ENCODE measurements at regions of chr7 and their contacts with region 1.

Region 1: DNA sequence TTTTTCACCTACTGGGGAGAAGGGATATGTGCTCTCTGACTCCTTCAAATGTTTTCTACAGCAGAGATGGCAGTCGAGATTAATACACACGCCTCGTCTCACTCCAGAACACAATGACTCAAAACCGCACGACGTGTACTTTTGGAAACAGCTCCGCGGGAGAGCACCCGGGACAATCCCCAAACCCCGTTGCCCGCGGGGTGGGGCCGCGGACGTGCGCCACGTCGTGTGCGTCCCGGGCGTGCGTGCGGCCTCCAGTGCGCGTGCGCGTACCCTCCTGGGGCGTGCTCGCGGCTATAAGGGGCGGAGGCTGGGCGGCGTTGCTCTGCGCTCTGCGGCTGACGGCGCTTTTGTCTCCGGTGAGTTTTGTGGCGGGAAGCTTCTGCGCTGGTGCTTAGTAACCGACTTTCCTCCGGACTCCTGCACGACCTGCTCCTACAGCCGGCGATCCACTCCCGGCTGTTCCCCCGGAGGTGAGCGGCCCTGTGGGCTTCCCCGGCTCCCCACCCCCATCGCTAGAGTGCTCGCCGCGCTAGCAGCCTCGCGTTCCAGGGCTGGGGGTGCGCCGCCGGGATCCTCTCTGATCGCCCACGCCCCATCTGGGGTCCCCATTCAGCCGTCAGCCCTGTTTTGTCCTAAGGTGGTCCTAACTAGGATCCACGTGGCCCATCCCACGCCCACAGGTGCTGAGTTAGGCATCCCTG is at the start of gene HILPDA:
- DNase-seq: peak; percentile 92
- H3K4me3 ChIP-seq: peak within 1 kb of the TSS; percentile 78
- H3K27ac ChIP-seq: peak within 1 kb of the TSS; percentile 75
- H3K4me1 ChIP-seq: no peaks in the 10 kb centered on the region
- H3K27me3 ChIP-seq: no peaks in the 10 kb centered on the region
- CTCF ChIP-seq: no peak
- total RNA-seq, gene HILPDA: 12.1 to 31.4 TPM

Region 2: GRCh38 chr7:128387216-128388144 is 68.2 kb before region 1 on chr7:
- intact Hi-C with region 1: no loop called
- DNase-seq: peak; percentile 73
- H3K4me3 ChIP-seq: no peak overlapping the region
- H3K27ac ChIP-seq: no peak overlapping the region
- H3K4me1 ChIP-seq: no peaks in the 10 kb centered on the region
- H3K27me3 ChIP-seq: no peaks in the 10 kb centered on the region
- CTCF ChIP-seq: peak; percentile 77

Region 3: GRCh38 chr7:128405471-128406313 is 50.0 kb before region 1 on chr7:
- intact Hi-C with region 1: loop called (anchors 2 kb)
- DNase-seq: peak; percentile 64
- H3K4me3 ChIP-seq: peak overlapping the region; percentile 80
- H3K27ac ChIP-seq: no peak overlapping the region
- H3K4me1 ChIP-seq: peaks cover 11% of the 10 kb centered on the region
- H3K27me3 ChIP-seq: no peaks in the 10 kb centered on the region
- CTCF ChIP-seq: no peak

Measured in colonic mucosa (tissue), 4 donors.